Caco-2 (cell line): ENCODE measurements at regions of chr4 and their contacts with region 1.

Region 1: GRCh38 chr4:158209825-158210807 is at the start of gene TMEM144:
- DNase-seq: peak; percentile 92 to 95
- H3K4me3 ChIP-seq: peak within 1 kb of the TSS; percentile 37
- H3K4me3 Mint-ChIP-seq: peak within 1 kb of the TSS; percentile 77
- H3K27ac Mint-ChIP-seq: peak within 1 kb of the TSS; percentile 82
- H3K4me1 ChIP-seq: peaks cover 13% of the 10 kb centered on the region
- H3K4me1 Mint-ChIP-seq: peaks cover 7% of the 10 kb centered on the region
- H3K27me3 ChIP-seq: no peaks in the 10 kb centered on the region
- H3K27me3 Mint-ChIP-seq: no peaks in the 10 kb centered on the region
- CTCF ChIP-seq: peak in 1 of 2 experiments; percentile 27
- total RNA-seq, gene TMEM144: 15.5 and 17.9 TPM in 2 replicates

Region 2: DNA sequence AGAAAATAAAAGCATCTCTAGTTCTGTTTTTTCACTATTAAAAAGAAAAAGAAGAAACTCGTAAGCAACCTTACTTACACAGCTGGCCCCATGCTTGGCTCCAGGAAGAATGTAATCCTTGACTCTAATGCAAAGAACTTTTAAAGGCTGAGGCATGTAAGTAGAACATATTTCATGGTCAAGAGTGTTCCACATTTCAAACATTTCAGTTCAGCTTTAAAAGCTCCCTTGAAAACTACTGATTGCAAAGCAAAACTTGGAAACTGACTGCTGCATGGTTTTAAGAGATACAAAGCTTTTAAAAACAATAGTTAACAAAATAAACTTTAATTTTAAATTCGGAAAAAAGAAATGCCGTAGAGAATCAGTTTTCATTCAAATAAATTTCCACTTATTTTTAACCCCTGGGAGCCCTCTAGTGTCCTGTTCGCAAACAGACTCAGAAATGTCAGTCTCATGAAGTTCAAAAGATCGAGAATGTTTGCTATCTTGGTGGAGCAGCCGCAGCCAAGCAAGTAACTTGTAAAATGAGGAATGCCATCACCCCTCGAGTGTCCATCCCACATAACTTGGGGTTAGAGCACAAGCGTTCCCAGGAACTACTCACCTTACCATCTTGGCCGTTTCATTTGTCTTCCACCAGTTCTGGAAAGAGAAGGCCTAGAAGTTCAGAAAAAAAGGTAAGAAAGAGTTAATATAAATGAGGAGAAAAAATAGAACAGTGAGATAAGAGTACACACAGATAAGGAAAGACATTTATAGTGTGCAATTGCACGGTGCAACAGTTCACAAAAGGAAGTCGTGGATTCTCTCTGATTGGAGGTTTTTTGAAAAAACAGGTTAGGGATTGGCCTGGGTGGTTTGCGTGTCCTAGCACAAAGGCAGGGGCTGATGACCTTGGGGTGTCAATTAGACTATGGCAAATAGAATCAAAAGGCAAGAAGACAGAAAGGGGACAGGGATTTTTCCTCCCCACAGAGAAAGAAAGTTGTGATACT is 37.6 kb before region 1 on chr4 and contains the start of gene GASK1B:
- CTCF ChIA-PET with region 1: no interaction called
- POLR2A ChIA-PET with region 1: interaction called, 3 read pairs
- intact Hi-C with region 1: loop called (anchors 2 kb)
- DNase-seq: peak; percentile 56 to 68
- H3K4me3 ChIP-seq: peak within 1 kb of the TSS; percentile 49
- H3K4me3 Mint-ChIP-seq: peak within 1 kb of the TSS; percentile 89
- H3K27ac Mint-ChIP-seq: peak within 1 kb of the TSS; percentile 97
- H3K4me1 ChIP-seq: peaks cover 14% of the 10 kb centered on the region
- H3K4me1 Mint-ChIP-seq: peaks cover 14% of the 10 kb centered on the region
- H3K27me3 ChIP-seq: no peaks in the 10 kb centered on the region
- H3K27me3 Mint-ChIP-seq: no peaks in the 10 kb centered on the region
- CTCF ChIP-seq: peak; percentile 25 to 27
- total RNA-seq, gene GASK1B: 42.5 and 48.5 TPM in 2 replicates

Region 3: GRCh38 chr4:158193171-158193749 is 16.9 kb before region 1 on chr4:
- CTCF ChIA-PET with region 1: interaction called, 7 read pairs
- POLR2A ChIA-PET with region 1: interaction called, 4 read pairs
- intact Hi-C with region 1: loop called (anchors 1 kb)
- DNase-seq: peak in 1 of 2 experiments; percentile 37
- H3K4me3 ChIP-seq: no peak overlapping the region
- H3K4me3 Mint-ChIP-seq: no peak overlapping the region
- H3K27ac Mint-ChIP-seq: no peak overlapping the region
- H3K4me1 ChIP-seq: no peaks in the 10 kb centered on the region
- H3K4me1 Mint-ChIP-seq: peaks cover 6% of the 10 kb centered on the region
- H3K27me3 ChIP-seq: no peaks in the 10 kb centered on the region
- H3K27me3 Mint-ChIP-seq: no peaks in the 10 kb centered on the region
- CTCF ChIP-seq: peak; percentile 35 to 44

Region 4: DNA sequence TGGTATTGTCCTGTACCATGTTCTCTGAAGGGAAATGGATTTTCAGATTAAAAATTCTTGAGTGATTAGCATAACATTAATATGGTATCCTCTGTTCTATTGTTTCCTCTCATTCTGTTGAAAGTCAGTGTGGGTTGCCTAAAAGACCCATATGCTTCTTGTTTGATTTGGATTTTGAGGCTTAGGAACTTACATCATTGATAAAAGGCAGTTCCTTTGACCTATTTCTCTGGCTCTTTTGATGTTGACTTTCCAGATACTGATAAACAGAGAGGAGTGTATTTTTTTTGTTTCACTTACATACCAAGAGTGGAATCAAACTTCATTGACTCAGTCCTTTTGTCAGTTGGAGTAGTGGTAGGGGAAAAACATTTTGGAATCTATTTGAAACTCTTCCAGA is 33.0 kb after region 1 on chr4:
- CTCF ChIA-PET with region 1: no interaction called
- POLR2A ChIA-PET with region 1: no interaction called
- intact Hi-C with region 1: loop called (anchors 1 kb)
- DNase-seq: peak in 1 of 2 experiments; percentile 41
- H3K4me3 ChIP-seq: no peak overlapping the region
- H3K4me3 Mint-ChIP-seq: peak overlapping the region; percentile 20
- H3K27ac Mint-ChIP-seq: peak overlapping the region; percentile 71
- H3K4me1 ChIP-seq: peaks cover 13% of the 10 kb centered on the region
- H3K4me1 Mint-ChIP-seq: peaks cover 14% of the 10 kb centered on the region
- H3K27me3 ChIP-seq: no peaks in the 10 kb centered on the region
- H3K27me3 Mint-ChIP-seq: no peaks in the 10 kb centered on the region
- CTCF ChIP-seq: no peak

Region 5: DNA sequence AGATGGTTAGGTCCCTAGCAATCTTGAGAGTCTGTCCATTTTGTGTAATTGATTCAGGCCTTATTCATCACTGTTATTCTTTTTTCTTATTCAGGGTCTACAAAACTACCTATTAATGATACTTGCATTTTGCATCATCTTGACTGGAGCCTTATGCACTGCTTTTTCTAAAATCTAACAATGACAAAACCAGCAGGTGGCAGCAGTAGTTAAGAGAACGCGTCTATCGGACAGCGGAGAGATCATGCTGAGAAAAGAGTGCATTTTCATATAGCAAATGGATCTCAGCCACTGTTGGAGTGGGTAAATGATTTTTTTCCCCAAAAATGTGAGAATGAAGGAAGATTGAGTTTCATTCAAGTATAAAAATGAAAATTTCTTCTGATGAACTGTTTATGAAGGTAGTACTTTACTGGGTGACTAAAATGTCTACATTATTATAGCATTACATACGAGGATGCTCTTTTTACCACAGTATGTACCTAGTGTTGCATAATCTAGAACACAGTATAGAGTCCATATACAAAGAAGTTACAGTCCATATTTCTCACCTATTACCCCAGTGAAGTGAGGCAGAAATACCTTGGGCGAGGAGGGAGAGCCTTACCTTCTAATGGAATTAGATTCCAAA is 43.3 kb after region 1 on chr4:
- CTCF ChIA-PET with region 1: no interaction called
- POLR2A ChIA-PET with region 1: no interaction called
- intact Hi-C with region 1: loop called (anchors 1 kb)
- DNase-seq: peak in 1 of 2 experiments; percentile 71
- H3K4me3 ChIP-seq: no peak overlapping the region
- H3K4me3 Mint-ChIP-seq: no peak overlapping the region
- H3K27ac Mint-ChIP-seq: no peak overlapping the region
- H3K4me1 ChIP-seq: no peaks in the 10 kb centered on the region
- H3K4me1 Mint-ChIP-seq: no peaks in the 10 kb centered on the region
- H3K27me3 ChIP-seq: no peaks in the 10 kb centered on the region
- H3K27me3 Mint-ChIP-seq: no peaks in the 10 kb centered on the region
- CTCF ChIP-seq: peak; percentile 44 to 61